ENCODE measurements at regions of chr20 and their contacts with region 1.

Region 1: DNA sequence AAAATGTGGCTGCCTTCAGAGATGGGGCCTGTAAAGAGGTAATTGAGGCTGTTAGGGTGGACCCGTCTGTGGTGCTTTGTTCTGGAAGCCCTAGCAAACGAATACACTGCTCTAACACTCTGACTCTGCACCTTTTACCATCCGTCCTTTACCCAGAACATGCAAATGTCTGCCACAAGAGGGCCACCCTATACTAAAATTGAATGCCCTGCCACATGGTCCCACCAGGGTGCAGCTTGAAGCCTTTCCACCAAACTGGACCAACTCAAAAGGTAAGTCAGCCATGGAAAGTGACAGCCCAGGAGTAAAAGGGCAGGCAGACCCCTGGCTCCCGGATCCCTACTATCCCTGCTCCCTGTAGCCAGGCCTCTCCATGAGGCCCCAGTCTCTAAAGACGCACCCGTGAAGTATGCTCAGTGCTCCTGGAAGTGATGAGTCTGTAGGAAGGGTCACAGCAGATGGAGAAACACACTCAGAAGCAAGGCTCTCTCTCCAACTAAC is 5.8 kb upstream of the BFSP1 start:
- H3K4me3 Mint-ChIP-seq: no peak overlapping the region
- H3K27ac Mint-ChIP-seq: no peak overlapping the region
- H3K4me1 Mint-ChIP-seq: peaks cover 5% of the 10 kb centered on the region
- H3K27me3 Mint-ChIP-seq: peaks cover 8% of the 10 kb centered on the region

Region 2: DNA sequence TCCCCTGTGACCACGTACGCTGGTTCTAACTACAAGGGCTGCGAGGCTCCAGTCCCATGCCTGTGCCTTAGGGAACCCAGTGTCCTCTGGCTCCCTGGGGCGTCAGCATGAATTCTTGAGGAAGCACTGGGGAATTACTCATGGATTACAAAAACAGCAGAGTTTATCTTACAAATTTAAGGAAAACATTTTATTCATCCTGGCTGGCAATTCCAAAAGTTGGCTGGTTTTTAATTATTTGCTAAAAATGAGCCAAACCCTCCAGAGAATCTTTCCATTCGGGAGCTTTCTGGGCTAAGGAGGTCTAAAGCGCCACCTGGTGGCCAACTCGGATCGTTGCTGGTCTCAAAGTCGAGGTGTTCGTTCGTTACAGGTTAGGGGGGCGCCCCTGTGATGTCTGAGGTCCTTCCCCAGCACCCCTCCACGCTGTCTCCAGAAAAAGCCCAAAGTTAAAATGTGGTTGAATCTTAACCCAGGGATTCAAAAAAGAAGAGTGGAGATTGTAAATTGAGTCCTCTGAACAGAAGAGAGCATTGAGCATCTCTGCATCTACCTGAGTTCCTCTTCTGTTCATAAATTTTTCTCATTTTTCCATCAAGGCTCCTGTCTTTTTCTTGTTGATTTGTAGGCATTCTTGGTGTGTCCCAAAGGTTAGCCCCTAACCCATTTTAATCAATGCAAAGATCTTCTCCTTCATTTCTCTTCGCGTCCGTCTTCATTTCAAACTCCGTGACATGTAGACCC is 105.2 kb before region 1 on chr20:
- intact Hi-C with region 1: no loop called
- H3K4me3 Mint-ChIP-seq: no peak overlapping the region
- H3K27ac Mint-ChIP-seq: no peak overlapping the region
- H3K4me1 Mint-ChIP-seq: no peaks in the 10 kb centered on the region
- H3K27me3 Mint-ChIP-seq: peaks cover 4% of the 10 kb centered on the region

Region 3: DNA sequence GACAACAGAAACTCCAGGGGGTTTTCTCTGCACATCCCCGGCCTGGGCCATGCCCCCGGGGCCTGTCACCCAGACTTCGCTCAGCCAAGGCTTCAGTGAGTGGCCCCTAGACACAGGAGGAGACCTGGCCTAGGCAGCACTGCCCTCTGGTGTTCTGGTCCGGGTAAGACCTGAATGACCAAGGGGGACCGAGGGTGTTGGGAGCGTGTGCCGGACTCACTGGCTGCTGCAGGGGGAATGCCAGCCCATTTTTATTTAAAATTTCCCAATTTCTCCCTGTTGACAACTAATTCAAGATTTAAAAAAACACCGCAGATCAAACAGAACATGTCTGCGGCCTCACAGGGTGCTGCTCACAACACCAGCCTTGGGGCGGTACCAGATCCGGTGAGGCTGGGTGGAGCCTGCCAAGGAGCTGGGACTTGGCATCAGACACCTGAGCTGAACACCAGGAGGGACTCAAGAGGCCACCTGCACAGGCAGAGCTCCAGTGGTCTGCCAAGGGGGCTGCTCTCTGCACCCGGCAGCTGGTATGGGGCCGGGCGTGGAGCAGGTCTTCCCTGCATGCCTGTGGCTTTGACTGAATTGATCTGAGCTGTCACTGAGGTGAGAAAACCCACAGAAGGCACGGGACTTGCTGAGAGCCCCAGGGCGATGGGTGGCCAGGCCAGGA is 80.7 kb after region 1 on chr20:
- intact Hi-C with region 1: loop called (anchors 2 kb)
- H3K4me3 Mint-ChIP-seq: no peak overlapping the region
- H3K27ac Mint-ChIP-seq: no peak overlapping the region
- H3K4me1 Mint-ChIP-seq: peaks cover 22% of the 10 kb centered on the region
- H3K27me3 Mint-ChIP-seq: no peaks in the 10 kb centered on the region

Region 4: DNA sequence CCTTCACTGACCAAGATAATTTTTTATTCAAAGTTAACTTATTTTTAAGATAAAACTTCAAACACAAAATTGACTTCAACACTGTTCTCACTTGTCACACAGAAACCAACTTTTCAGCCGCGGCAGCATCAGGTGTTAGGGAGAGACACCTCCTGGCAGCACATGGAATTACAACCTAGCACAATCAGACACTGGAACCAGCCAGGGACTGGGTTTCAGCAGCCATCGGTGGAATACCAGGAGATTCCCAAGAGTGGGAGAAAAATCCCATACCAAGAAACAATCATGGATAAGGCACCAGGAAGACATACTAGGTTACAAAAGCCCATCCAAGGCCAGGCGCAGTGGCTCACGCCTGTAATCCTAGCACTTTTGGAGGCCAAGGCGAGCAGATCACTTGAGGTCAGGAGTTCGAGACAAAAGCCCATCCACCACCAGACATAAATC is 361.6 kb after region 1 on chr20:
- intact Hi-C with region 1: loop called (anchors 2 kb)
- H3K4me3 Mint-ChIP-seq: no peak overlapping the region
- H3K27ac Mint-ChIP-seq: no peak overlapping the region
- H3K4me1 Mint-ChIP-seq: peaks cover 24% of the 10 kb centered on the region
- H3K27me3 Mint-ChIP-seq: peaks cover 42% of the 10 kb centered on the region

Measured in dendritic cell treated with granulocyte-macrophage colony-stimulating factor and Interleukin-4, amounts not matched to agents 40 ng/mL and 50 ng/mL, for 4 days (primary cell).